CD4-positive, alpha-beta T cell (primary cell): ENCODE measurements at regions of chr22 and their contacts with region 1.

Region 1: DNA sequence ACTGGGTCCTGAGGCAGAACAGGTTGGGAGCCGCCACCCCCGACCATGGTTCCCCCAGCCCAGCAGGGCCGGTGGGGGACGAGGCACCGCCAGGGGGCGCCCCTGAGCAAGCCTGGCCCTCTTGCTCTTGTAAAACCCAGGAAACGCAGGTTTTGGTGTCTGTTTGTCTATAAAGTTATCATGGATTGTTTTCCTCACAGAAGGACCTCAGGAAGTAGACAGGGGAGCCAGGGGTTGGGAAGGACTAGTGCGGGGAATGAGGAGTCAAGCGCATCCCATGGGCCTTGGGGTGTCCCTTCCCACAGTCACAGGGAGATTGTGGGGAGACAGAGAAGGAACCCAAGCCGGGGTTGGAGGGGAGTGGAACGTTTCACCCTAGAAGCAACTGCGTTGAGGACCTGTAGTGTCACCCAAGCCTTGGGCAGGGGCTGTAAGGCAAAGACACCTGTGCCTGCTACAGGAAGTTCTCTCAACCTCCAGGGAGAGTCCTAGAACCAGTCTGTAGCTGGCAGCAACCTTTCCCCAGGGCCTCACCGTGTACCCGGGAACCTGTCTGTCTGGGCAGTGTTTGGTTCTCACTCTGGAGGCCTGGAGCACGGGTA is 26.4 kb downstream of the KCTD17 start:
- DNase-seq: peak; percentile 69 to 92 (median 84)
- ATAC-seq: peak; percentile 14
- H3K4me3 ChIP-seq: no peak overlapping the region
- H3K4me3 Mint-ChIP-seq: peak overlapping the region; percentile 12
- H3K27ac ChIP-seq: peak overlapping the region in 1 of 2 donors; percentile 5
- H3K27ac Mint-ChIP-seq: peak overlapping the region; percentile 99
- H3K4me1 ChIP-seq: peaks cover 47% of the 10 kb centered on the region
- H3K4me1 Mint-ChIP-seq: peaks cover 34% of the 10 kb centered on the region
- H3K27me3 ChIP-seq: no peaks in the 10 kb centered on the region
- H3K27me3 Mint-ChIP-seq: no peaks in the 10 kb centered on the region
- CTCF ChIP-seq: peak; percentile 99

Region 2: GRCh38 chr22:37063431-37064420 is 14.3 kb before region 1 on chr22:
- CTCF ChIA-PET with region 1: no interaction called
- POLR2A ChIA-PET with region 1: no interaction called
- intact Hi-C with region 1: loop called in 1 of 2 experiments (anchors 1 kb)
- DNase-seq: peak in 4 of 14 experiments; percentile 27 to 38 (median 32)
- ATAC-seq: no peak
- H3K4me3 ChIP-seq: no peak overlapping the region
- H3K4me3 Mint-ChIP-seq: no peak overlapping the region
- H3K27ac ChIP-seq: no peak overlapping the region
- H3K27ac Mint-ChIP-seq: no peak overlapping the region
- H3K4me1 ChIP-seq: peaks cover 21% of the 10 kb centered on the region
- H3K4me1 Mint-ChIP-seq: peaks cover 6% of the 10 kb centered on the region
- H3K27me3 ChIP-seq: peaks cover 0 to 3% of the 10 kb centered on the region in 2 experiments
- H3K27me3 Mint-ChIP-seq: peaks cover 10% of the 10 kb centered on the region
- CTCF ChIP-seq: no peak

Region 3: GRCh38 chr22:37148742-37149665 is 71.0 kb after region 1 on chr22:
- CTCF ChIA-PET with region 1: interaction called, 3 read pairs
- POLR2A ChIA-PET with region 1: interaction called, 5 read pairs
- intact Hi-C with region 1: loop called (anchors 1 to 2 kb)
- DNase-seq: peak in 1 of 14 experiments; percentile 35
- ATAC-seq: no peak
- H3K4me3 ChIP-seq: peak overlapping the region; percentile 78
- H3K4me3 Mint-ChIP-seq: peak overlapping the region; percentile 93
- H3K27ac ChIP-seq: peak overlapping the region; percentile 61 to 82
- H3K27ac Mint-ChIP-seq: peak overlapping the region; percentile 97
- H3K4me1 ChIP-seq: peaks cover 63% of the 10 kb centered on the region
- H3K4me1 Mint-ChIP-seq: peaks cover 76% of the 10 kb centered on the region
- H3K27me3 ChIP-seq: no peaks in the 10 kb centered on the region
- H3K27me3 Mint-ChIP-seq: no peaks in the 10 kb centered on the region
- CTCF ChIP-seq: no peak

Region 4: DNA sequence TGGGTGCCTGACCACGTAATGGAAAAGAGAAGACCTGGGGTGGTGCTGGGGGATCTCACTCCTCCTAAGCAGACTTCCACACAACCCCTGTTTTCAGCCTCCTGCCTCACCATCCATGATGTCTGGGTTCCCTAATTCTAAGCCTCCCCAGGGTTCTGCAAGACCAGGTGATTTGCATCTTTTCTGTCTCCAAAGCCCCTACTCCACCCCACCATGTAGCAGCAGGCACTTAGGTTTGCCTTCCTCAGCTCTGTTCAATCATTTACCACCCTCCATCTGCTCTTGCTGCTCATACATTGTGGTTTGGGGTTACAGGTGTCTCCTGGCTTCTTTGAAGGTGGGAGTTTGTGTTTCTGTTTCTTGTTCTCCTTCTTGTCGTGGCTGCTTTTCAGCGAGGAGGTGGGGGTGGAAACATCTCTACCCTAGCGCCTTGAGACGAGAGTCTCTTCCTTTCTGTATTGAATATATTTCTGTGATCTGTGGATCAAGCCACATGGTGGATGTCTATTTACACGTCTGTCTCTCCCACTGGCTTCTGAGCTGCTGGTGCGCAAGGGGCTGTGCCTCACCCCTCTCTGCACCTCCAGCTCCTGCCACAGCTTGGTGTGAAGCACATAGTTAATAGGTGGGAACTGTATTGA is 140.9 kb after region 1 on chr22:
- CTCF ChIA-PET with region 1: no interaction called
- POLR2A ChIA-PET with region 1: interaction called, 3 read pairs
- intact Hi-C with region 1: loop called in 1 of 2 experiments (anchors 5 kb)
- DNase-seq: peak; percentile 54 to 93 (median 74)
- ATAC-seq: peak; percentile 80
- H3K4me3 ChIP-seq: peak overlapping the region; percentile 49
- H3K4me3 Mint-ChIP-seq: peak overlapping the region; percentile 64
- H3K27ac ChIP-seq: peak overlapping the region; percentile 71 to 82
- H3K27ac Mint-ChIP-seq: peak overlapping the region; percentile 84
- H3K4me1 ChIP-seq: peaks cover 76% of the 10 kb centered on the region
- H3K4me1 Mint-ChIP-seq: peaks cover 93% of the 10 kb centered on the region
- H3K27me3 ChIP-seq: no peaks in the 10 kb centered on the region
- H3K27me3 Mint-ChIP-seq: no peaks in the 10 kb centered on the region
- CTCF ChIP-seq: no peak

Region 5: GRCh38 chr22:37267135-37267587 is 189.2 kb after region 1 on chr22:
- CTCF ChIA-PET with region 1: no interaction called
- POLR2A ChIA-PET with region 1: no interaction called
- intact Hi-C with region 1: loop called (anchors 5 kb)
- DNase-seq: peak; percentile 46 to 84 (median 70)
- ATAC-seq: peak; percentile 91
- H3K4me3 ChIP-seq: peak overlapping the region; percentile 71
- H3K4me3 Mint-ChIP-seq: peak overlapping the region; percentile 87
- H3K27ac ChIP-seq: peak overlapping the region; percentile 67 to 86
- H3K27ac Mint-ChIP-seq: peak overlapping the region; percentile 91
- H3K4me1 ChIP-seq: peaks cover 24% of the 10 kb centered on the region
- H3K4me1 Mint-ChIP-seq: peaks cover 40% of the 10 kb centered on the region
- H3K27me3 ChIP-seq: no peaks in the 10 kb centered on the region
- H3K27me3 Mint-ChIP-seq: no peaks in the 10 kb centered on the region
- CTCF ChIP-seq: peak; percentile 99